ENCODE measurements at regions of chr4 and their contacts with region 1.

Region 1: DNA sequence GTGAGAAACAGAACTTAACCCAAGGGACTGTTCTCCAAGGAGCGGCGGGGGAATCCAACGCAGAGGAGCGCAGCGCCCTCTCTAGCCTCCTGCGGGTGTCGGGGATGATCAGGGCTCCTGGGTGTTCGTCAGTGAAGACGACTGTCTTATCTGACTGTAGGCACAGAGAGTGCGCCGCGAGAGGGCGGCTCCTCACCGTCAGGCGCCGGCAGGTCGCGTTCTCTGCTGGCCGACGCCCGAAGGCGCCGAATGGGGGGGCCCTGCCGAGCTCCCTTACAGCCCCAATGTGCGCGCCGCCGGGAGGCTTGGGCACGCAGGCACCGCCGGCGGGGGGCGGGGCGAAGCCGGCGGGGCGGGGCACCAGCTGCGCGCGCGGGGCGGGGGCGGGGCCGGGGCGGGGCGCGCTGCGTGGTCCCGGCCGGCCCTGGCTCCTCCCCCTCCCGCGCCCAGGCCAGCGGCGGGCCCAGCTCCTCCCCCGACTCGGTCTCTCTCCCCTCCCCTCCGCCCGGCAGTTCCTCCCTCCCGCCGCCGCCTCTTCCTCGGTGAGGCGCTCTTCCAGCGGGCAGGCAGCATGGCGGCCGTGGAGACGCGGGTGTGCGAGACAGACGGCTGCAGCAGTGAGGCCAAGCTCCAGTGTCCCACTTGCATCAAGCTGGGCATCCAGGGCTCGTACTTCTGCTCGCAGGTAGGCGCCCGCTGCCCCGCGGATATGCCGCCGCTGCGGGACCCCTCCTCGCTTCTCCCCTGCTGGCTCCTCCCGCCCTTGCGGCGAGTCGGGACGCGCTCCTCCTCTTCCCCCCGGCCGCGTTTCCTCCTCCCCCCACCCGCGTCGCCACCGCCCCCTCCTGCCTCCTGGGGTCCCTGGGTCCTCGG is at the start of gene METAP1:
- DNase-seq: peak; percentile 94 to 97 (median 95)
- H3K4me3 ChIP-seq: peak within 1 kb of the TSS; percentile 61
- H3K27ac ChIP-seq: peak within 1 kb of the TSS; percentile 59 to 79
- H3K4me1 ChIP-seq: no peaks in the 10 kb centered on the region
- H3K27me3 ChIP-seq: no peaks in the 10 kb centered on the region
- CTCF ChIP-seq: peak in 2 of 3 donors; percentile 45 to 50
- EP300 ChIP-seq: no peak
- POLR2A ChIP-seq: peak; percentile 52
- total RNA-seq, gene METAP1: 19.8 to 34.5 (median 25.4) TPM

Region 2: DNA sequence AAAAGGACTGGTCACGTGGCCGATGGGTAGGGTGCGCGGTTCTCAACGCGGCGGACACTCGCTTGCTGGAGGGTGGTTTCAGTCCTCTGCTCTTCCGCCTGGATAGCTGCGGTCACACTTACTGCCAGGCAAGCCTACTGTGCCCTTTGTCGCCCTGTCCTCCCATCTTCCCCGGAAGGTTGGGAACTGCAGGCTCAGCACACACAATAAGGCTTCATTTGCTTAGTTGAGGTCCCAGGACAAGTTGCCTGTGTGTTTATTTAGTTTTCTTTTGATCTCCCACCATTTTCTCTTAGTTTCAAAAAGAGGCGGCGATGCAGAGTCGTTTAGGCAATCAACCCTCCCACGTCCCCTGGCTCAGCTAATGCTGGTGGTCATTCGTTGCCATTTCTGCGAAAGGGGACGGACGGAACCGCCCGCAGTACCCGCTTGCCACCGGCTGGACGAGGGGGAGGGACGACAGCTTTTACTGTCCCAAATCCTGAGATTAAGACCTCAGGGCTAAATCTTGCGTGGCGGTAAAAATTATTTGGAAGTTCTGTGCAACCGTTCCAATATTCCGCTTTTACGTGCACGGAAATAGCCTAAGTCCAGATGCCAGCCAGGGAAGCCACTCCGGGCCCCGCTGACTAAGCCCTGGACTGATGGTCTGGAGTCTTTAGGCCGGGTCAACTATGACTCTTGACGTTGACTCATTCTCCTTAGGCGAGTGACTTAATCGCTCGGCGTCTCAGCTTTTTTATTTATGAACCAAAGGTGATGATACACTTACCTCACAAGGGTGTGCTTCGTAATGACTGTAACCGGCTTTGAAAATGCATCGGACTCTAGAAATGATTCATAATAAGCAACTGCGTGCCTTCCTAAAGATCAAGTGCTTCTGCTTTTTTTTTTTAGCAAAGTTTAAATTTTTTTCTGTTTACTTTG is 65.8 kb before region 1 on chr4:
- intact Hi-C with region 1: loop called in 2 of 4 experiments (anchors 2 to 10 kb)
- DNase-seq: peak; percentile 45 to 73 (median 58)
- H3K4me3 ChIP-seq: peak overlapping the region; percentile 97
- H3K27ac ChIP-seq: peak overlapping the region; percentile 76 to 87
- H3K4me1 ChIP-seq: no peaks in the 10 kb centered on the region
- H3K27me3 ChIP-seq: no peaks in the 10 kb centered on the region
- CTCF ChIP-seq: peak in 1 of 3 donors; percentile 33
- EP300 ChIP-seq: peak; percentile 19
- POLR2A ChIP-seq: peak; percentile 7

Region 3: DNA sequence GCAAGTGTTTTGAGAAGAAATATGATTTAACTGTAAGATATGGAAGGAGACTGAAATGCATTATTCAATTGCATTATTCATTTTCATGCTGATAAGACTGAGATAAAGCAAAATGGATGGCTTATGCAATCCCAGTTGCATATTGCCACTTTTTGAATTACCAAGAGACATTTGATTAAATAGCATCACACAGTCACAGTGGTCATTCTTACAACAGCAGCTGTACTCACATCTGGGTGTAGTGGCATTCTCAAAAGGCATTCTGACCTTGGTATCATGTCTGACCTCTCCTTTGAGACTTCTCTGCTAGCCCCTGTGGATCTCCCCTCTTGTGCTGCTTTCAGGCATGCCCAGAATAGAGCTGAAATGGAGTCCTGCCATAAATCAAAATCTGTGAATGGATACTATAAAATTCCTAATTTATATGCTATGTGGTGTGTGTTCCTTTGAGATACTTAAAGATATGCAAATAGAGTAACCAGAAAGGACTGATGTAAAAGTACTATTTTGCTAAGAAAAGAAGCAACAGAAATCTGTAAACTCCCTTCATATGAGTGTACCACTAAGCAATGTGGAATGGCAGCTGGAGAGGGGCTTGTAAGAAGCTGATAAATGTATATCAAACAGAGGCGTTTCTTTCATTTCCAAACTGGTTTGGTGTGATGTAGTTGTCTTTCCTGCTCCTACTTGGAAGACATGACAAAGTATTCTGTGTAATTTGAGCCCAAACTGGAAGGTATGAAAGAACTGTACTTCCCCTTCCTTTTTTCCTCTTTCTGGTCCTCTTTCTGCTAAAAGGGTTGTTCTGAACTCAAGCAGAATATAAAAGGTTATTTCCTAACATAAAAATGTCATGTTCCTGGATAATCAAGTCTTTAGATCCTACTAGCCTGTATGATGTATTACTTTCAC is 25.3 kb before region 1 on chr4:
- intact Hi-C with region 1: no loop called
- DNase-seq: no peak
- H3K4me3 ChIP-seq: no peak overlapping the region
- H3K27ac ChIP-seq: no peak overlapping the region
- H3K4me1 ChIP-seq: no peaks in the 10 kb centered on the region
- H3K27me3 ChIP-seq: no peaks in the 10 kb centered on the region
- CTCF ChIP-seq: no peak
- EP300 ChIP-seq: no peak
- POLR2A ChIP-seq: no peak

Region 4: DNA sequence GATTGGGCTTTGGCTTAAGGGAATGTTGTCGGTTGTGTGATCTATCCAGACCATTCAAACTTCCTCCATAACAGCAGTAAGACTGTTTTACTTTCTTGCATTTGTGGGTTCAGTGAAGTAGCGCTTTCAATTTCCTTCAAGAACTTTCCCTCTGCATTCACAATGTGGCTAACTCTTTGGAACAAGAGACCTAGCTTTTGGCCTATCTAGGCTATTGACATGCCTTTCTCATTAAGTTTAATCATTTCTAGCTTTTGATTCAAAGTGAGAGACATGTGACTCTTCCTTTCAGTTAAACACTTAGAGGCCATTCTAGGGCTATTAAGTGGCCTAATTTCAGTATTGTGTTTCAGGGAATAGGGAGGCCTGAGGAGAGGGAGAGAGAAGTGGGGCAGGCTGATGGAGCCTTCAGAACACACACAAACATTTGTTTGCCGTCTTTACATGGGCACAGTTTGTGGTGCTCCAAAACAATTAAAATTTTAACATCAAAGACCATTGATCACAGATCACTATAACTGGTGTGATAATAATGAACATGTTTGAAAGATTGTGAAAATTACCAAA is 59.1 kb after region 1 on chr4:
- intact Hi-C with region 1: loop called in 1 of 4 experiments (anchors 5 kb)
- DNase-seq: no peak
- H3K4me3 ChIP-seq: no peak overlapping the region
- H3K27ac ChIP-seq: no peak overlapping the region
- H3K4me1 ChIP-seq: no peaks in the 10 kb centered on the region
- H3K27me3 ChIP-seq: no peaks in the 10 kb centered on the region
- CTCF ChIP-seq: no peak
- EP300 ChIP-seq: no peak
- POLR2A ChIP-seq: no peak

Measured in ovary (tissue), 10 donors.